Transverse colon (tissue), 4 donors: ENCODE measurements at regions of chr18 and their contacts with region 1.

Region 1: GRCh38 chr18:41150316-41150715 is 804.7 kb upstream of the PIK3C3 start:
- DNase-seq: no peak
- H3K4me3 ChIP-seq: no peak overlapping the region
- H3K27ac ChIP-seq: no peak overlapping the region
- H3K4me1 ChIP-seq: no peaks in the 10 kb centered on the region
- H3K27me3 ChIP-seq: no peaks in the 10 kb centered on the region
- CTCF ChIP-seq: no peak
- EP300 ChIP-seq: no peak
- POLR2A ChIP-seq: no peak

Region 2: GRCh38 chr18:41073372-41073954 is 76.9 kb before region 1 on chr18:
- in situ Hi-C with region 1: loop called in 1 of 4 experiments (anchors 25 kb)
- intact Hi-C with region 1: no loop called
- DNase-seq: no peak
- H3K4me3 ChIP-seq: no peak overlapping the region
- H3K27ac ChIP-seq: no peak overlapping the region
- H3K4me1 ChIP-seq: no peaks in the 10 kb centered on the region
- H3K27me3 ChIP-seq: no peaks in the 10 kb centered on the region
- CTCF ChIP-seq: no peak
- EP300 ChIP-seq: no peak
- POLR2A ChIP-seq: no peak

Region 3: DNA sequence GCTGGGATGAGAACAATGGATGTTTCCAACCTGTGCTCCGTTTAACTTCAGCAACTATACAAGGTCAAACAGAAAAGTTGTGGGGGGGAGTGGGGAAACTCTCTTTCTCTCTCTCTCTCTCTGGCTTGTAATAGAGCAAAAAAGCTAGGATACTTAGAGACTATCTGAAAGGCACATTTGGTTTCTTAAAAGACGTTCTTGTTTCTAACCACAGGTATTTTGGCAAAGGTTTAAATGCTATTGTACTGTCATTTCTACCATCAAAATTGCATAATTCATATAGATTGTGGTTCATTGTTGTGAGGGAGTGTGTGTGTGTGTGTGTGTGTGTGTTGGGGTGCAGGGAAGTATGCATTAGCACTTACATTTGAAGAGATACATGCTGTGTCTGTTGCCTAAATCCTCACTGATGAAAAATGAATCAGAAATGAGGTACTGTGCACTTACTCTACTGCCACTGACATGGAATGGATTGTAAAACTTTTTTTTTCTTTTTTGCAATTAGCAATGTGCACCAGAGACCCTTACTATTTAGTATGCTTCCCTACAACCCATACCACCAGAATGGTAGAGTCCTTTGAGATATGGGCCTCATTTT is 36.3 kb before region 1 on chr18:
- in situ Hi-C with region 1: no loop called
- intact Hi-C with region 1: loop called (anchors 1 kb)
- DNase-seq: no peak
- H3K4me3 ChIP-seq: no peak overlapping the region
- H3K27ac ChIP-seq: no peak overlapping the region
- H3K4me1 ChIP-seq: no peaks in the 10 kb centered on the region
- H3K27me3 ChIP-seq: no peaks in the 10 kb centered on the region
- CTCF ChIP-seq: no peak
- EP300 ChIP-seq: no peak
- POLR2A ChIP-seq: no peak